ENCODE measurements at regions of chr1 and their contacts with region 1.

Region 1: GRCh38 chr1:161225534-161226319 is at the start of gene TOMM40L:
- DNase-seq: peak; percentile 87
- H3K4me3 Mint-ChIP-seq: peak within 1 kb of the TSS; percentile 99
- H3K27ac Mint-ChIP-seq: peak within 1 kb of the TSS; percentile 100
- H3K4me1 Mint-ChIP-seq: peaks cover 24% of the 10 kb centered on the region
- H3K27me3 Mint-ChIP-seq: peaks cover 3% of the 10 kb centered on the region
- total RNA-seq, gene TOMM40L: 25.3 and 28.0 TPM in 2 replicates

Region 2: GRCh38 chr1:161117759-161118581 is 107.8 kb before region 1 on chr1 and contains the starts of genes NIT1 and PFDN2:
- intact Hi-C with region 1: loop called (anchors 1 kb)
- DNase-seq: peak; percentile 84
- H3K4me3 Mint-ChIP-seq: peak within 1 kb of the TSS; percentile 97
- H3K27ac Mint-ChIP-seq: peak within 1 kb of the TSS; percentile 96
- H3K4me1 Mint-ChIP-seq: peaks cover 75% of the 10 kb centered on the region
- H3K27me3 Mint-ChIP-seq: no peaks in the 10 kb centered on the region
- total RNA-seq, gene NIT1: 51.3 and 56.3 TPM in 2 replicates
- total RNA-seq, gene PFDN2: 147 and 164 TPM in 2 replicates

Region 3: GRCh38 chr1:161185282-161185682 is 40.4 kb before region 1 on chr1:
- intact Hi-C with region 1: loop called (anchors 1 kb)
- DNase-seq: peak; percentile 74
- H3K4me3 Mint-ChIP-seq: peak overlapping the region; percentile 53
- H3K27ac Mint-ChIP-seq: peak overlapping the region; percentile 95
- H3K4me1 Mint-ChIP-seq: peaks cover 81% of the 10 kb centered on the region
- H3K27me3 Mint-ChIP-seq: no peaks in the 10 kb centered on the region

Region 4: GRCh38 chr1:161209790-161210409 is 15.8 kb before region 1 on chr1:
- intact Hi-C with region 1: loop called (anchors 1 kb)
- DNase-seq: peak; percentile 62
- H3K4me3 Mint-ChIP-seq: no peak overlapping the region
- H3K27ac Mint-ChIP-seq: peak overlapping the region; percentile 60
- H3K4me1 Mint-ChIP-seq: peaks cover 41% of the 10 kb centered on the region
- H3K27me3 Mint-ChIP-seq: no peaks in the 10 kb centered on the region

Region 5: GRCh38 chr1:161238039-161238473 is 12.3 kb after region 1 on chr1 and contains the start of gene NR1I3:
- intact Hi-C with region 1: no loop called
- DNase-seq: no peak
- H3K4me3 Mint-ChIP-seq: no peak within 1 kb of the TSS
- H3K27ac Mint-ChIP-seq: no peak within 1 kb of the TSS
- H3K4me1 Mint-ChIP-seq: no peaks in the 10 kb centered on the region
- H3K27me3 Mint-ChIP-seq: peaks cover 10% of the 10 kb centered on the region
- total RNA-seq, gene NR1I3: not detected in 2 replicates

Region 6: GRCh38 chr1:161314201-161314981 is 88.7 kb after region 1 on chr1 and contains the start of gene SDHC:
- intact Hi-C with region 1: loop called (anchors 1 kb)
- DNase-seq: peak; percentile 88
- H3K4me3 Mint-ChIP-seq: peak within 1 kb of the TSS; percentile 99
- H3K27ac Mint-ChIP-seq: peak within 1 kb of the TSS; percentile 87
- H3K4me1 Mint-ChIP-seq: peaks cover 26% of the 10 kb centered on the region
- H3K27me3 Mint-ChIP-seq: peaks cover 2% of the 10 kb centered on the region
- total RNA-seq, gene SDHC: 157 and 162 TPM in 2 replicates

Region 7: DNA sequence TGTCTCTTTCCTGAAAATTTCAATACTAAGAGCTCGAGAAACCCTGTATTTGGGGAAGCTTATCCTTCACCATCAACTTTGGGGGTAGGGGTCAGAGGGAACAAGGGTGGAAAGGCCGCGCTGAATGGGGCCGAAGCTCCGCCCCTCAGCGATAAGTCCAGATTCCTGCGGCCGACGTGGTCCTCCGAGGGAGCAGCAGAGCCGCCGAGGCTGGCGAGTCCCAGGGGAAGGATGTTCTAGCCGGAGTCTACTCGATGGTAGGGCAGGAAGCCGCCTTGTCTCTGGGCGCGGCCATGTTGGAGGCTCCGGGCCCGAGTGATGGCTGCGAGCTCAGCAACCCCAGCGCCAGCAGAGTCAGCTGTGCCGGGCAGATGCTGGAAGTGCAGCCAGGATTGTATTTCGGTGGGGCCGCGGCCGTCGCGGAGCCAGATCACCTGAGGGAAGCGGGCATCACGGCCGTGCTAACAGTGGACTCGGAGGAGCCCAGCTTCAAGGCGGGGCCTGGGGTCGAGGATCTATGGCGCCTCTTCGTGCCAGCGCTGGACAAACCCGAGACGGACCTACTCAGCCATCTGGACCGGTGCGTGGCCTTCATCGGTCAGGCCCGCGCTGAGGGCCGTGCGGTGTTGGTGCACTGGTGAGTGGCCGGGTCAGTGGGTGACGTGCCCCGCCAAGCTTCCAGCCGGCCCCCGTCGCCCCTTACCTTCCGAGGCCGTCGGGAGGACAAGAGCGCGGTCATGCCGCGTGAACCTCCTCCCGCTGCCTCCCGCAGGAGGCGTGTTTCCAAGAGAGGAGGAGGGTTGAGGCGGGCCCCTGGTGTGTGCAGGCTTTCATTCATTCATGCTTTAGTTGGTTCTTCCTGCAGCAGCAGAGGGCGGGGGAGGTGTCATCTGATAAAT is 524.0 kb after region 1 on chr1 and contains the start of gene DUSP12:
- intact Hi-C with region 1: loop called (anchors 2 kb)
- DNase-seq: peak; percentile 82
- H3K4me3 Mint-ChIP-seq: peak within 1 kb of the TSS; percentile 98
- H3K27ac Mint-ChIP-seq: peak within 1 kb of the TSS; percentile 99
- H3K4me1 Mint-ChIP-seq: peaks cover 32% of the 10 kb centered on the region
- H3K27me3 Mint-ChIP-seq: peaks cover 27% of the 10 kb centered on the region
- total RNA-seq, gene DUSP12: 34.1 and 36.0 TPM in 2 replicates